Activated CD4-positive, alpha-beta memory T cell treated with anti-CD3 and anti-CD28 coated beads, Interleukin-2, amount 10 ng/mL, durations not matched to agents 7 days and 5 days (primary cell): ENCODE measurements at regions of chr3 and their contacts with region 1.

Region 1: GRCh38 chr3:181700168-181701087 is 11.3 kb upstream of the SOX2 start:
- DNase-seq: peak; percentile 54
- H3K4me3 Mint-ChIP-seq: peak overlapping the region; percentile 28
- H3K27ac Mint-ChIP-seq: peak overlapping the region; percentile 5
- H3K4me1 Mint-ChIP-seq: peaks cover 27% of the 10 kb centered on the region
- H3K27me3 Mint-ChIP-seq: peaks cover 85% of the 10 kb centered on the region

Region 2: DNA sequence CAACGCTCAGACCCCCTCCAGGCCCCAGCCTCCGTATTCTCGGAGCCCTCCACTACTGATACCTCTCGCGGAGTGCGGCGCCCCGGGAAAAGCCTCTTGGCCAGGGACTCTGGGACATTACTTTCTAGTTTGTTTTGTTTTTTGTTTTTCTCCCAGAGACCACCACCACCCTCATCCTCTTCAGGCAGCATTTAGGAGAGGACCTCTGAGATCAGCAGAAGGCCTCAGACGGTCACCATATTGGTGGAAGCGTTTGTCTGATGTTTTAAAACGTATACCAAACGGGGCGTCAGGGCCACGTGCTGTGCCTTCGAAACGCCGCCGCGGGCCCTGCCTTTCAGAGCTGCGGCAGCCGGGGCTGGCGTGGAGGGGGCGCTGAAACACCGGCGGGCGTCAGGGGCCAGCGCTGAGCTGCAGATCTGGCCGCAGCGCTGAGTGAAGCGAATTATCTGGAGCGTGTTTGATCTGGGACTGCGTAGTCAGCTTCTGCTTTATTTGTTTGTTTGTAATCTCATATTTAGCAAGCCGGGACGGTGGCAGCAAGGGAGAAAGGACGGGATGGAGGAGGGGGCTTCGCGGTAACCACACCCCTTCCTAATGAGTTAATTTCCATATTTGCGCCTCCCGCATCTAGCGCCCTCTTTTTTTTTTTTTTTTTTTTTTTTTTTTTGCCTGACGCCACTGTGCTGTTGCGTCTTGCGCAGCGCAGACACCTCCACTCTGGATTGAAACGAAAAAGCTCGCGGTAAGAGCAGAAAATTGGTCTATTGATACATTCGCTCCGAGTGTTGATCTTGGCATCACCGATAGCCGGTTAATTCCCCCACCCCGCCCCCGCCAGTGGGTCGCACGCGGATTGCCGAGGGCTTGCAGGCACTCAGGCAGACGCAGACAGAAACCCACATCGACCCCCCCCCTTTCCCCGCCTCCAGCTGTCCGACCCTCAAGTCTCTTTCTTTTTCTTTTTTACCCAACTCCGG is 26.2 kb after region 1 on chr3:
- CTCF ChIA-PET with region 1: interaction called, 17 read pairs
- POLR2A ChIA-PET with region 1: no interaction called
- DNase-seq: no peak
- H3K4me3 Mint-ChIP-seq: peak overlapping the region; percentile 21
- H3K27ac Mint-ChIP-seq: peak overlapping the region; percentile 35
- H3K4me1 Mint-ChIP-seq: peaks cover 3% of the 10 kb centered on the region
- H3K27me3 Mint-ChIP-seq: peaks cover 88% of the 10 kb centered on the region